ENCODE measurements at regions of chr11 and their contacts with region 1.

Region 1: DNA sequence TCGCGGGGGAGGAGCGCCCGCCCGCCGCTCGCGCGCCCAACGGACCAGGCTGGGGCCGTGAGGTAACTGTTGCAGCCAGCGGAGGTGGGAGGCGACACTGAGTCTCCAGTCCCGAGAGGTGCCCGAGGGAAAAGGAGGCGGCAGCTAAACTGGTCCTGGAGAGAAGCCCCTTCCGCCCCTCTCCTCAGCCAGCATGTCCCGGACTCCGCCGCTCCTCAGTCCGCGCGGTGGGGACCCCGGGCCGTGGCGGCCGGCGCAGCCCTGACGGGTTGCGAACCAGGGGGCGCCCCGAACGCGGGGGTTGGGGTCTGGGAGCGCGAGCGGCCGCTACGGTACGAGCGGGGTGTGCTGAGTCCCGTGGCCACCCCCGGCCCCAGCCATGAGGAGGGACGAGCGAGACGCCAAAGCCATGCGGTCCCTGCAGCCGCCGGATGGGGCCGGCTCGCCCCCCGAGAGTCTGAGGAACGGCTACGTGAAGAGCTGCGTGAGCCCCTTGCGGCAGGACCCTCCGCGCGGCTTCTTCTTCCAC is at the start of gene PDE3B:
- DNase-seq: peak; percentile 89
- ATAC-seq: peak; percentile 95 to 96
- total RNA-seq, gene PDE3B: 17.8 to 18.7 TPM

Region 2: GRCh38 chr11:14544611-14545010 is 99.2 kb before region 1 on chr11:
- intact Hi-C with region 1: loop called in 1 of 2 experiments (anchors 5 kb)
- DNase-seq: no peak
- ATAC-seq: no peak

Region 3: DNA sequence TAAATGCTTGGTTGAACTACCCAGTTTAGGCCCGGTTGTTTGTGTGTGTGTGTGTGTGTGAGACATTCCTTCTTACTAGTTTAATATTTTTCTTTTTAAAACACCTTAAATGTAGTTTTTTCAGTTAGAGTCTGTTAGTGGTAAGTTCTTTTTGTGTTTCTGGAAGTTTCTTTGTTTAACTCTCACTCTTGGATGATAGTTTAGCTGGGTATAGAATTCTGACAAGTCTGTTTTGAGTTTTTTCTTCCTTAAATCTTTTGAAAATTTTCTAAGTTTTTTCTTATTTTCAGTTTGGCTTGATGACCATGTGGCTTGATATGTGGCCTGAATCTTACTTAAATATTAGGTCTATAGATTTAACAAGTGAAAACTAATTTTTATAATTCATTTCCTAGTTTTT is 60.0 kb after region 1 on chr11:
- intact Hi-C with region 1: no loop called
- DNase-seq: no peak
- ATAC-seq: no peak

Region 4: DNA sequence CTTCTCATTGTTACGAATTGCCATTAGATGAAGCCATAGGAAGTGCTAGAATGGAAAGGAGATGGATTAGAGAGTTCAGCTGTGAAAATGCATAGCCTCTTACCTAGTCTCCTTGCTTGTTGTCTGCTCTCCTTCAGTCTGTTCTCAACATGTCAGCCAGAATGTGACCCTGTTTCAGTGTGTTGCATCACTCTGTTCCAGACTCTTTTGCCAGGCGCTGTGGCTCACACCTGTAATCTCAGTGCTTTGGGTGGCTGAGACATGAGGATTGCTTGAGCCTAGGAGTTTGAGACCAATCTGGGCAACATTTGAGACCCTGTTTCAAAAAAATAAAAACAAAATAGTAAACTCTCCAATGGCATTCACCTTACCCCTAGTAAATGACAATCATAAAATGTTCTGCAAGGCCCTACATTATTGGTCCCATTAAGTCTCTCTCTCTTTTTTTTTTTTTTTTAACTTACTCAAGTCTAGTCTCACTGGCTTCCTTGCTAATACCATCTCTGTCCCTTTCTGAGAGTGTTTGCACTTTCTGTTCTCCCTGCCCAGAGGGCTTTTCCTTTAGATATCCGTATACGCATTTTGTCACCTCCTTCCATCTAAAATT is 208.9 kb after region 1 on chr11:
- intact Hi-C with region 1: no loop called
- DNase-seq: no peak
- ATAC-seq: no peak

Region 5: DNA sequence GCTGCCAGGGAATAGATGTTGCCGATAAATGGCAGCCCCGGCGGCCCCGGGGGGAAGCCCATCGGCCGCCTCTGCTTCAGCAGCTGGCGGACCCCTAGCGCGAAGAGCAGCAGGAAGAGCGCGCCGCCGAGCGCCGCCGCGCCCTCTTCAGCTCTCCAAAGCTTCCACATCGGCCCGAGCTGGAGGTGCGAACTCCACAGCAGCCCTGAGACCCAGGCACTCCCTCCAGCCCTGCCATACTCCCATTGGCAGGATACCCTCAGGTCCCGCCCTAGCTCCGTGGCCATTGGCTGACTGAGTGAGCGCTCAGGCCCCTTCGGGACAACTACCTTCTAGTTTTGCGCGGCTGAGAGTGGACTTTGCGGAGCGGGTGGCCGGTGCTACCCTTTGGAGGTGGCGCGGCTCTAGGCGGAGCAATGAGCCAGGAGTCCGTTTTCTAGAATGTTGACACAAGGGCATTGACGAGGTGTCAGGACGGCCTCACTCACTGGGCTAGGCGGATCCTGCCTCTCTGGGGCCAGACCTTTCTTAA is 248.3 kb after region 1 on chr11 and contains the start of gene CYP2R1:
- intact Hi-C with region 1: loop called in 1 of 2 experiments (anchors 10 kb)
- DNase-seq: peak; percentile 96
- ATAC-seq: peak; percentile 98 to 99
- total RNA-seq, gene CYP2R1: 7.8 to 10.1 TPM

Measured in left cardiac atrium (tissue), 4 donors.